Caco-2 (cell line): ENCODE measurements at regions of chr4 and their contacts with region 1.

Region 1: DNA sequence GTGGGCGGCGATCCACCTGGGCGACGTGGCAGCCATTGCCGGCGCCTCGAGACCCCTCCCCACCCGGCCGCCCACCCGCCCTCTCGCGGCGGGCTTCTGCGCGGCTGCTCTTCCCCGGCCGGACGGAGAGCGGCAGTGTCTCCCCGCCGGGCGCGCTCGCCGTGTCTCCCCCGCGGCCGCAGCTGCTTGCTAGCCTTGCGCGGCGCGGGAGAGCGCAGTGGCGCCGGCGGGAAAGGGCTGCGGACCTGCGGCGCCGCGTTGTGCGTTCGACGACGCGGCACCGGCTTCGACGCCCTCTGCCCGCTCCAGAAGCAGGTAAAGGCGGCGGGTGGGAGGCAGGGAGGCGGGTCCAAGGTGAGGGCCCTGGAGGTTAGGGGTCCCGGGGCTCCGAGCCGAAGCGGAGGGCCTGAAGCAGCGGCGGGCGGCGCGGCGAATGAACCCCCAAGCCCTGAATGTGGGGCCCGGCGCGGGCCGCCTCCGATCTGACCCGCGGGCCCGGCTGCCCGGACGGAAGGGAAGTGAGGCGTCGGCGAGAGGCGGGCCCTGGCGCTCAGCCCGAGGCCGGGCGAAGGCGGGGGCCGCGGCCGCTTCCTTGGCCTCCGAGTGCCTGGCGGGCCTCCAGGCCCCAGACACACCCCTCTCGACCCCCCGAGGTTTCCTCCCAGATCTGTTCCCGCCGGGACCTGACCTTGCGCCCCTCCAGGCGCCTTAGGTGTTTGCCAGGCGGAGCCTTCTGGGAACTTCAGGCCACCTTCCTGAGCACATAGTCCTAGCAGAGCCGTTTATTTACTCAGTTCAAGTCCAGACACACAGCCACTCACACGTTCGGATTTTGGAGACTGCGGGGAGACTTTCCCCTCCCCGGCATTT is at the start of gene N4BP2:
- DNase-seq: peak; percentile 78 to 88
- H3K4me3 ChIP-seq: peak within 1 kb of the TSS; percentile 74
- H3K4me3 Mint-ChIP-seq: peak within 1 kb of the TSS; percentile 92
- H3K27ac Mint-ChIP-seq: peak within 1 kb of the TSS; percentile 93
- H3K4me1 ChIP-seq: peaks cover 5% of the 10 kb centered on the region; the same call in 1 of the 2 replicates
- H3K4me1 Mint-ChIP-seq: peaks cover 13% of the 10 kb centered on the region
- H3K27me3 ChIP-seq: no peaks in the 10 kb centered on the region
- H3K27me3 Mint-ChIP-seq: no peaks in the 10 kb centered on the region
- CTCF ChIP-seq: peak; percentile 42 to 72
- total RNA-seq, gene N4BP2: 27.5 and 28.7 TPM in 2 replicates

Region 2: DNA sequence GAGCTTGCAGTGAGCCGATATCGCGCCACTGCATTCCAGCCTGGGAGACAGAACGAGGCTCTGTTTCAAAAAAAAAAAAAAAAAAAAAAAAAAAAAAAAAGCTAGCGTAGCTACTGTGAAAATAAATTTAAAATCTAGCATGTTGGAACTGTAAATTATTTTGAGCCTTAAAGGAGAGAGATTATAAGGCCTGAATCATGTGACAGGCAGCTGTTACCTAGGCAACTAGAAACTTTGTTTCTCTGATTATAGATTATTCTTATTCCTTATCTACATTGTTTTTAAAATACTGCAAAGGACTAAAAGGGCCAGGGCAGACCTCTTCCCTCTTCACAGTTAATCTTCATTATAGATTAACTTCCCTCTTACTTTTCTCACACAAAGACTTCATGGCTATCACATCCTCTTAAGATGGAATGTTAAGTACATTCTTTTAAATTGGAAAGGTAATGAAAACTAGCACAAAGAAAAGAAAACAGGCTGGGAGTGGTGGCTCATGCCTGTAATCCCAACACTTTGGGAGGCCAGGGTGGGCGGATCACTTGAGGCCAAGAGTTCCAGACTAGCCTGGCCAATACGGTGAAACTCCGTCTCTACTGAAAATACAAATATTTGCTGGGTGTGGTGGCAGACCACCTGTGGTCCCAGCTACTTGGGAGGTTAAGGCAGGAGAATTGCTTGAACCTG is 58.1 kb before region 1 on chr4:
- CTCF ChIA-PET with region 1: no interaction called
- POLR2A ChIA-PET with region 1: no interaction called
- intact Hi-C with region 1: no loop called
- DNase-seq: peak; percentile 12 to 50
- H3K4me3 ChIP-seq: no peak overlapping the region
- H3K4me3 Mint-ChIP-seq: no peak overlapping the region
- H3K27ac Mint-ChIP-seq: peak overlapping the region; percentile 53
- H3K4me1 ChIP-seq: 0 out of 2 replicates have a peak, but pooled peaks cover 4% of the 10 kb centered on the region
- H3K4me1 Mint-ChIP-seq: no peaks in the 10 kb centered on the region
- H3K27me3 ChIP-seq: no peaks in the 10 kb centered on the region
- H3K27me3 Mint-ChIP-seq: no peaks in the 10 kb centered on the region
- CTCF ChIP-seq: no peak

Region 3: GRCh38 chr4:40046311-40046980 is 10.5 kb before region 1 on chr4:
- CTCF ChIA-PET with region 1: interaction called, 5 read pairs
- POLR2A ChIA-PET with region 1: interaction called, 17 read pairs
- intact Hi-C with region 1: loop called (anchors 1 kb)
- DNase-seq: peak; percentile 62 to 77
- H3K4me3 ChIP-seq: no peak overlapping the region
- H3K4me3 Mint-ChIP-seq: peak overlapping the region; percentile 59
- H3K27ac Mint-ChIP-seq: peak overlapping the region; percentile 88
- H3K4me1 ChIP-seq: peaks cover 10% of the 10 kb centered on the region; the same call in 1 of the 2 replicates
- H3K4me1 Mint-ChIP-seq: peaks cover 11% of the 10 kb centered on the region
- H3K27me3 ChIP-seq: no peaks in the 10 kb centered on the region
- H3K27me3 Mint-ChIP-seq: no peaks in the 10 kb centered on the region
- CTCF ChIP-seq: peak; percentile 16 to 34

Region 4: DNA sequence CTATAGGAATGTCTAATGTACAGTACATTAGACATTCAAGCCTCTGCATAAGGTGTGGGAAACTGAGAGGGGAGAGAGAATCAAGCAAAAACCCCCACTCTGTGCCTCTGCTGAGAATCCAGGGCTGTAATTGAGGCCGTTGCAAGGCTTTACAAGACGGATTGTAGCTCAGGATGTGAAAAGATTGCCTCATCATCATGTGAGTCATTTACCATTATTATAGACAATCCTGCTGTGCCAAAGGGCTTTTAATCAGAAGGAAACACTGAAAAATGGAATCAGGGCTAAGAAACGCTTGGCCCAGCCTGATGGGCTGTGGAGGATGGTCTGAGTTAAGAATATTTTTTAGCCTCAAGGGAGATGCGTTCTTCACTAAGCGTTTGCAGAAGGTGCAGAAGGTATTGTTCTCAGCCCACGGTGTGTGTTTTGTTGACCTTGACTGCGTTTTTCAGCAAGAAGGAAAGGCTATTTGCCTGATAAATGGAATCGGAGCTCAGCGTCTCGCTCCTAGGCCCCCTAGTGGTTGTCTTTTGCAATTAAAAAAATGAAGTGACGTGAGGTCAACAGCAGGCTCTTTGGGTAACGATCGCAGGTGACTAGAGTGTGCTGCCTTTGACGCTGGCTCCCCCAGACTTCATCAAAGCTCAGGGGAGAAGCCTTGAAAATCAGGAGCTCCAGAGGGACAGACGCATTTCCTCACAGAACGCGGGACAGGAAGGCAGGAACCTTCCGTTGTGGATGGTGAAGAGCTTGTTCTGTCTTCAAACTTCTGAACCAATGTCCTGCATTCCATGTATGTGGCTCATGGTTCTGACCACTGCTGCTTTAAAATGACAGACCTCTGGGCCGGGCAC is 260.1 kb after region 1 on chr4:
- CTCF ChIA-PET with region 1: interaction called, 3 read pairs
- POLR2A ChIA-PET with region 1: no interaction called
- intact Hi-C with region 1: loop called (anchors 5 kb)
- DNase-seq: peak; percentile 58 to 74
- H3K4me3 ChIP-seq: no peak overlapping the region
- H3K4me3 Mint-ChIP-seq: peak overlapping the region; percentile 46
- H3K27ac Mint-ChIP-seq: peak overlapping the region; percentile 49
- H3K4me1 ChIP-seq: peaks cover 10% of the 10 kb centered on the region; the same call in 1 of the 2 replicates
- H3K4me1 Mint-ChIP-seq: peaks cover 32% of the 10 kb centered on the region
- H3K27me3 ChIP-seq: no peaks in the 10 kb centered on the region
- H3K27me3 Mint-ChIP-seq: no peaks in the 10 kb centered on the region
- CTCF ChIP-seq: peak; percentile 57 to 76

Region 5: DNA sequence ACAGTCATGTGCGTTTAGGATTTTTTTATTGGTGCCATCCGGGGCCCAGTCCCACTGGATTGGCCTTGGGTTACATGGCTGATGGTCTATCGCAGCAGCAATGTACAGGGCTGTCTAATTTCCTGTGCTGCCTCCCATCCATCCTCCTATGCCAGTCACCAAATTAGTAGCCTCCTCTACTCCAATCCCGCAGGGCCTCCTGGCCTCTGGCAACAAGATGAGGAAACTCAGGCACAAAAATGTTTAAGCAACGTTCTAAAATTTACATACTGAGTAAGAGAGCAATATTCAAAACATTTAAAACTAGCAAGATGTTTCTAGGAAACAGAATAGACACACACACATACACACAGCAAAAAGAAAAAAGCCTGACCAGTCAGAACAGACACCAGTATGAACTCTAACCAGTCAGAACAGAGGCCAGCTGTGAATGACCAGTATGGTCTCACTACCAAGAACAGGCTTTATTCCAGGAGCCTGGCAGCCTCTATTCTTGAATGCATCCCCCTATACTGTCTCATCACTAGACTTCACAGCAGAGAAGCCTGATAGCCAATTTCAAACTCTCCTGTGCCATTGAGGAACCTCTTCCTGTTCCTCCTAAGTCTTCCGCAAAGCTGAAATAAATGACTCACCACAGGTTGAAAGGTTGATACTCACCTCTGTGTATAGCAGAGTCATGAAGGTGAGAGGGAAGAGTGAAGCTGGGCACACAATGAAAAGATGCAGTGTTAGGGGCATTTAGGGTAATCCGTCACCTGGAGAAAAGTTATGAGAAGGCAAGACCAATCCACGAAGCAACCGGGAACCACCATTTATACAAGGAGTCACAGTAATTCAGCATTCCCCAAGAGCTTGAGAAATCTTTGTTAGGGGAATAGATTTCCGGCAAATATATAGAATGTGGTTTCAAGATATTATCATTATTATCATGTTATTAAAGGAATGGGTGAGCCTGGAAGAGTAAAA is 320.9 kb after region 1 on chr4:
- CTCF ChIA-PET with region 1: no interaction called
- POLR2A ChIA-PET with region 1: no interaction called
- intact Hi-C with region 1: no loop called
- DNase-seq: no peak
- H3K4me3 ChIP-seq: no peak overlapping the region
- H3K4me3 Mint-ChIP-seq: no peak overlapping the region
- H3K27ac Mint-ChIP-seq: no peak overlapping the region
- H3K4me1 ChIP-seq: 0 out of 2 replicates have a peak, but pooled peaks cover 3% of the 10 kb centered on the region
- H3K4me1 Mint-ChIP-seq: peaks cover 7% of the 10 kb centered on the region
- H3K27me3 ChIP-seq: no peaks in the 10 kb centered on the region
- H3K27me3 Mint-ChIP-seq: no peaks in the 10 kb centered on the region
- CTCF ChIP-seq: no peak